ENCODE measurements at regions of chr13 and their contacts with region 1.

Region 1: GRCh38 chr13:50521831-50522149 is 321.7 kb downstream of the DLEU7 start:
- DNase-seq: no peak
- H3K4me3 ChIP-seq: no peak overlapping the region
- H3K27ac ChIP-seq: no peak overlapping the region
- H3K27me3 ChIP-seq: no peaks in the 10 kb centered on the region
- CTCF ChIP-seq: no peak

Region 2: DNA sequence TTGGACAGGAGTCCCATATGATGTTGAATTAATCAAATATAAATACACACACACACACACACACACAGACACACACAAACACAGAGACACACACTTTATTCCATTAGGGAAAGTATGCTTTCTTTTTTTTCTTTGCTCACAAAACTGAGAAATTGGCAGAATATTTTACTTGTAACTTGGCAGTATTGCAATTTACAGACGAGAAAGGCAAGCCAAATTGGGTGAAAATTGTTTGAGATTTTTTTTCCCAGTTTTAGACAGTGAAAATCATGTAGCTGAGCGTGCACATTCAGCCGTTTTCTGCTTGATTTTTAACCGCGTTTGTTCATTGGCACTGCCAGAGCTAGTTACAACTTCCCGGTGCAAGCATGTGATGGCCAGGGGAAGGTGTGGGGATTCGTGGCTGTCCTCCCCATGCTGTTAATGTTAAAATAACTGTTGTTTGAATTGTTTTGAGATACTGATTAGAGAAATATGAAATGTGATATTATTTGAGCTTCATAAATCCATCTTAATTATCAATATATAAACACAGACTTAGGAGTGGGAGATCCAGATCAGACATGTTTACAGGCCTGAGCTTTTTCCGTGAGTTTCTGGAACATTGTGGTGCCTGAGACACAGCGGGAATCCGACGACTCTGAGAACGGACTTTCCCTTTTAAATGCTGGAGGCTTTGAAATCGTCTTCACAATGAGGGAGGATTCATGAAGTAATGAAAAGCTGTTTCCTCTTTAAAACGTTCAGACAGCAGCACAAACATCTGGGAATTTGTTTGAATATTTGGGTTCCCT is 381.0 kb before region 1 on chr13:
- CTCF ChIA-PET with region 1: no interaction called
- POLR2A ChIA-PET with region 1: no interaction called
- DNase-seq: no peak
- H3K4me3 ChIP-seq: no peak overlapping the region
- H3K27ac ChIP-seq: no peak overlapping the region
- H3K27me3 ChIP-seq: peaks cover 7% of the 10 kb centered on the region
- CTCF ChIP-seq: no peak

Region 3: DNA sequence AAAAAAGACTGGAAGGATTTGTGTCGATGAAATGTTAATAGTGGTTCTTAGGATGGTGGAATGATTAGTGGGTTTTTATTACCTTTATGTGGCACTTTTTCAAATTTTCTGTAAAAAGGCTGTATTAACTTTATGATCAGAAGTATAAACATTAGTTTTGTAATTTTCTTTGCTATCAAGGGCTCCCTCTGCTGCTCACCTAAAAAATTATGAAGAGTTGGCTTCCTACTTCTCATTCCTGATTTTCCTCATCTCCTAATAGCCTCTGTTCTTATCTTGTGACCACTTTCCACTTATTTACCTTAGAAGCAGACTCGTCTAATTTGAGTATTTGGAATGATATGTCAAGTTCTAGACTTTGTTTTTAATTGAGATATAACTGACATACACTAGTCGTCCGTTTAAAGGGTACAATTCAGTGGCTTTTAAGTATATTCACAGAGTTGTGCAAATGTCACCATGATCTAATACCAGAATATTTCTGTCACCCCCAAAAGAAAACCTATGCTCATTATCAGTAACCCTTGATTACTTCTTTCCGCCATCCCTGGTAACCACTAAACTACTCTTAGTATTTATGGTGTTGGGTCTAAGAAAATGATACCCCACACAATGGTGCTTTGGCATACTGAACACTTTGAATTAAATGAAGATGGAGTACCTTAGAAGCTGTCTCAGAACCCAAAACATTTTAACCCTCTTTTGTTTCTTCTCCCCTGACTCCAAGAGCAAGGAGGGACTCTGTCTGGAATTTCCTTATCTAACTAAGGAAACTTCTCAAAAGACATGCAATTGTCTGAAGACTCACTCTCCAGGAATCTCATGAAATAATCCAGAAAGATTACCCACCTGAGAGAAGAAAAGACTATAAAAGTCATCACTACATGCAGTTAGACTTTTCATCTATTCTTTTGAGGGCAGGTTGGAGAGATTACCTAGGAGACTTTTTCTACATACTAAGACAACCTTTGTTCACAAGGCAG is 10.4 kb after region 1 on chr13:
- CTCF ChIA-PET with region 1: no interaction called
- POLR2A ChIA-PET with region 1: no interaction called
- DNase-seq: no peak
- H3K4me3 ChIP-seq: no peak overlapping the region
- H3K27ac ChIP-seq: no peak overlapping the region
- H3K27me3 ChIP-seq: no peaks in the 10 kb centered on the region
- CTCF ChIP-seq: peak; percentile 64

Region 4: DNA sequence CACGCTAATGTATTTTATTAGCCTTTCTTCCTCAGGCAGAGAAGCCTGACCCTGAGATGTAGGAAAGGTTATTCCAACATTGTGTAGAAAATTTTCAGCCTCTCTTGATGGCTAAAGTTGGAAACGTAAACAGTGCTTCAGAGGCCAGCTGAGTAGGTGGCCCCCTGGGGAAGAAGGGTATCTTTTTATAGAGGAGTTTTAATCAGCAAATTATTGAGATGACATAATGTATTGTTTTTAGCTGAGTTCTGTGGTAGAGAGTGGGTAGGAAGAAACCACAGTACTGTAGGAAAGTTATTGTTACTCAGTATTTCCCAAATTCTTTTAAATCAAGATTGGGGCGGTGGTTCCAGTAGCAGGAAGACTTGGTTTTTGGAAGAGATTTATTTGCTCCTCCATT is 52.9 kb after region 1 on chr13:
- CTCF ChIA-PET with region 1: no interaction called
- POLR2A ChIA-PET with region 1: no interaction called
- DNase-seq: no peak
- H3K4me3 ChIP-seq: no peak overlapping the region
- H3K27ac ChIP-seq: no peak overlapping the region
- H3K27me3 ChIP-seq: no peaks in the 10 kb centered on the region
- CTCF ChIP-seq: no peak

Region 5: DNA sequence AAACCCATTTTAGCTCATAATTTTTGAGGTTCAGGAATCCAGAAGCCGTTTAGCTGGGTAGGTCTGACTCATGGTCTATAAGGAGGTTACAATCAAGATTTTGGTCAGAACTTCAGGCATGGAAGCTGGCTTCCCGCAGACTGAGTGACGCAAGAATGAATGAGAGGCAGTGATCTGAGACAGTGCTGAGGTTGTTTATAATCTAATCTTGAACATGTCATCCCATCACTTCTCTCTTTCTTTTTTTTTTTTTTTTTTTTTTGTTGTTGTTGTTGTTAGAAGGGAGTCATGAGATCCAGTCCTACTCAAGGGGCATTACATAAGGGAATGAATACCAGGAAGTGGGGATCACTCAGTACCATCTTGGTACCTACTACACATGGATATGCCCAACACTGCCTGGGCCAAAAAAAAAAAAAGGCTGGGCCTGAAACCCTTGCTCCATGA is 104.3 kb after region 1 on chr13:
- CTCF ChIA-PET with region 1: no interaction called
- POLR2A ChIA-PET with region 1: interaction called, 11 read pairs
- DNase-seq: no peak
- H3K4me3 ChIP-seq: no peak overlapping the region
- H3K27ac ChIP-seq: no peak overlapping the region
- H3K27me3 ChIP-seq: peaks cover 7% of the 10 kb centered on the region
- CTCF ChIP-seq: no peak

Measured in AG04450 (cell line).